ENCODE measurements at regions of chr11 and their contacts with region 1.

Region 1: DNA sequence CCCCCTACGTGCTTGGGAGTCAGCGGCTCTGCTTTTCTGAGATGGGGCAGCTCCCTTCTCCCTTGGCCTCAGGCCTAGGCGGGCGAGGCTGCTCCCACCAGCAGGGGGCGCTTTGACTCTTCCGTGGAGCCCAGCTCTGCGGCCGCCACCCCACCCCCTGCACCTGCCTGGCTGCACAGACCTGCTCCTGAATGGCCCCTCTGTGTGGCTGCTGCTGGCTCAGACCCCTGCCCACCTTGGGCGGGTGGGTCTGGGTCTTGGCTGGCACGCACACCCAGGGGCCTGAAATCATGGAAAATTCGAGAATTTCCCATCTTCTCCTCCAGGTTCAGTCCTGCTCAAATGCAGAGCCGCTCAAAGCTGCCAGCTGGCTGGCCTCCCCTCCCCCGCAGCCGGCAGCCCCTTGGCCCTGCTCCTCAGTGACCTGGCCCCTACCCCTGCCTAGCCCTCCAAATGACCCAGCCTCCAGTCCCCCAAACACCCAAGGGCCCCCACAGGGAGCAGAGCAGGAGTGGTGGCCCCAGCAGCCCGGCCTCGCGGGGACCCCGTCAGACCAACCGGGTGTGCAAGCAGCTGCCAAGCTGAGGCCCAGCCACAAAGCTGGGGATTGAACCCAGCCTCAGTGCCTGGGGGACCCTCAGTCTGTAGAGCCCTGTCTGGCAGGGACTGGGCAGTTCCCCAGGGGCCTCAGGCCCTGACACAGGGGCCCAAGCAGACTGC is 9.0 kb downstream of the PRR33 start:
- DNase-seq: peak; percentile 57 to 91 (median 83)
- ATAC-seq: peak; percentile 91
- H3K4me3 ChIP-seq: no peak overlapping the region
- H3K4me3 Mint-ChIP-seq: no peak overlapping the region
- H3K27ac ChIP-seq: no peak overlapping the region
- H3K27ac Mint-ChIP-seq: no peak overlapping the region
- H3K4me1 ChIP-seq: peaks cover 14% of the 10 kb centered on the region
- H3K4me1 Mint-ChIP-seq: peaks cover 12% of the 10 kb centered on the region
- H3K27me3 ChIP-seq: no peaks in the 10 kb centered on the region
- H3K27me3 Mint-ChIP-seq: no peaks in the 10 kb centered on the region
- CTCF ChIP-seq: peak; percentile 69

Region 2: DNA sequence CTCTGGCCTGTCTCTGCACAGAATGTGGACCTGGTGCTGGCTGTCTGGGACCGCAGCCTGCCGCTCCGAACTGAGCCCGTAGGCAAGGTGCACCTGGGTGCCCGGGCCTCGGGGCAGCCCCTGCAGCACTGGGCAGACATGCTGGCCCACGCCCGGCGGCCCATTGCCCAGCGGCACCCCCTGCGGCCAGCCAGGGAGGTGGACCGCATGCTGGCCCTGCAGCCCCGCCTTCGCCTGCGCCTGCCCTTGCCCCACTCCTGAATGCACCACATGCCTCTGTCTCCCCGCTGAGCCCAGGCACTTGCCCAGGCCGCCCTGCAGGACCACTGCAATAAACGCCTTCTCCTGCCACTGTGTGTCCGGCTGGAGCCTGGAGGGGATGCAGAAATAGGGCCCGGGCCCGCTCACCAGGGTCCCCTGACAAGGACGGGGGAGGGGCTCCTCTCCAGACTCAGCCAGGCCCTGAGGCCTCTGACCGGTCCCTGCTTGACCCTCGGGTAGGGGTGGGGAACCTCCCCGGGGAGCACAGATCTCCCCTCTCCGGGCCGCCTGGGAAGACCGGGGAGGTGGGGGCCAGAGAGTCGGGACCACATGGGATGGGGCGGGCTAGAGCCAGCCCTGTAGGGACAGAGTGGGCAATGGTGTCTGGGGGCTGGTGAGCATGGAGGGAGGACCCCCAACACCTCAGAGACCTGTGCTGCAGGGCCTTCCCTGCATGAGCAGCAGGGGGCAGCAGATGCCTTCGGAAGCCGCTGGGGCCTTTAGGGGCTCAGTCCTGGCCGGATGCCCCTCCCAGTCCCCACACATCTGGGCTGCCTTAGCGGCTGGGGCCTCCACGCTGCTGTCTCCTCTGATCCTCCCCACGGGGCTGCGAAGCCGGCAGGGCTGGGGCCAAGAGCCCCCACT is 45.3 kb before region 1 on chr11:
- CTCF ChIA-PET with region 1: interaction called, 16 read pairs
- POLR2A ChIA-PET with region 1: interaction called, 3 read pairs
- intact Hi-C with region 1: loop called (anchors 1 kb)
- DNase-seq: peak; percentile 73 to 94 (median 88)
- ATAC-seq: peak; percentile 98
- H3K4me3 ChIP-seq: no peak overlapping the region
- H3K4me3 Mint-ChIP-seq: no peak overlapping the region
- H3K27ac ChIP-seq: no peak overlapping the region
- H3K27ac Mint-ChIP-seq: no peak overlapping the region
- H3K4me1 ChIP-seq: peaks cover 25% of the 10 kb centered on the region
- H3K4me1 Mint-ChIP-seq: peaks cover 10% of the 10 kb centered on the region
- H3K27me3 ChIP-seq: peaks cover 0 to 6% of the 10 kb centered on the region in 2 experiments
- H3K27me3 Mint-ChIP-seq: no peaks in the 10 kb centered on the region
- CTCF ChIP-seq: peak; percentile 84

Region 3: DNA sequence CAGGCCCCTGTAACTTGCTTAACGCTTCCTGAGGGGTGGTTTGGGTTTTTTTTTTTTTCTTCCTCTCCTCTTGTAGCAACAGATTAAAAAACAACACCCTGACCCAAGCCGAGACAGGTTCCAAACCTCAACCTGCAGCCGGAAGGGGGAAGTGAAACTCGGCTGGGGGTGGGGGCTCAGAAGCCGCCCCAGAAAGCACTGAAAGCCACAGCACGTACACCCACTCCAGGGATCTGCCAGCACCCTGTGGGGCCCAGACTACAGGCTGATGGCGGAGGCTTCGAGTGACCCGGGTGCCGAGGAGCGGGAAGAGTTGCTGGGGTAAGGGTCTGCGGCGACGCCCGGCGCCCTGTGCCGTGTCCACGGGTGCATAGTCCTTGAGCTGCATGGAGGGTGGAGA is 29.8 kb before region 1 on chr11 and contains the start of gene LSP1:
- CTCF ChIA-PET with region 1: interaction called, 74 read pairs
- POLR2A ChIA-PET with region 1: interaction called, 27 read pairs
- intact Hi-C with region 1: loop called in 1 of 2 experiments (anchors 2 kb)
- DNase-seq: peak; percentile 64 to 96 (median 86)
- ATAC-seq: peak; percentile 65
- H3K4me3 ChIP-seq: peak within 1 kb of the TSS; percentile 81 to 100
- H3K4me3 Mint-ChIP-seq: peak within 1 kb of the TSS; percentile 94
- H3K27ac ChIP-seq: peak within 1 kb of the TSS; percentile 90 to 91
- H3K27ac Mint-ChIP-seq: peak within 1 kb of the TSS; percentile 92
- H3K4me1 ChIP-seq: peaks cover 81% of the 10 kb centered on the region
- H3K4me1 Mint-ChIP-seq: peaks cover 67% of the 10 kb centered on the region
- H3K27me3 ChIP-seq: no peaks in the 10 kb centered on the region
- H3K27me3 Mint-ChIP-seq: no peaks in the 10 kb centered on the region
- CTCF ChIP-seq: no peak
- total RNA-seq, gene LSP1: 190 to 191 TPM

Region 4: GRCh38 chr11:1870721-1871466 is 11.8 kb before region 1 on chr11:
- CTCF ChIA-PET with region 1: interaction called, 24 read pairs
- POLR2A ChIA-PET with region 1: no interaction called
- intact Hi-C with region 1: no loop called
- DNase-seq: peak in 8 of 9 experiments; percentile 31 to 82 (median 62)
- ATAC-seq: peak; percentile 84
- H3K4me3 ChIP-seq: peak overlapping the region; percentile 26 to 33
- H3K4me3 Mint-ChIP-seq: peak overlapping the region; percentile 76
- H3K27ac ChIP-seq: peak overlapping the region; percentile 45 to 46
- H3K27ac Mint-ChIP-seq: peak overlapping the region; percentile 94
- H3K4me1 ChIP-seq: peaks cover 70% of the 10 kb centered on the region
- H3K4me1 Mint-ChIP-seq: peaks cover 59% of the 10 kb centered on the region
- H3K27me3 ChIP-seq: no peaks in the 10 kb centered on the region
- H3K27me3 Mint-ChIP-seq: no peaks in the 10 kb centered on the region
- CTCF ChIP-seq: no peak

Region 5: GRCh38 chr11:1943977-1944376 is 61.3 kb after region 1 on chr11:
- CTCF ChIA-PET with region 1: interaction called, 34 read pairs
- POLR2A ChIA-PET with region 1: interaction called, 3 read pairs
- intact Hi-C with region 1: no loop called
- DNase-seq: peak in 1 of 9 experiments; percentile 40
- ATAC-seq: no peak
- H3K4me3 ChIP-seq: no peak overlapping the region
- H3K4me3 Mint-ChIP-seq: no peak overlapping the region
- H3K27ac ChIP-seq: no peak overlapping the region
- H3K27ac Mint-ChIP-seq: no peak overlapping the region
- H3K4me1 ChIP-seq: peaks cover 3% of the 10 kb centered on the region
- H3K4me1 Mint-ChIP-seq: peaks cover 5% of the 10 kb centered on the region
- H3K27me3 ChIP-seq: no peaks in the 10 kb centered on the region
- H3K27me3 Mint-ChIP-seq: no peaks in the 10 kb centered on the region
- CTCF ChIP-seq: no peak

Region 6: DNA sequence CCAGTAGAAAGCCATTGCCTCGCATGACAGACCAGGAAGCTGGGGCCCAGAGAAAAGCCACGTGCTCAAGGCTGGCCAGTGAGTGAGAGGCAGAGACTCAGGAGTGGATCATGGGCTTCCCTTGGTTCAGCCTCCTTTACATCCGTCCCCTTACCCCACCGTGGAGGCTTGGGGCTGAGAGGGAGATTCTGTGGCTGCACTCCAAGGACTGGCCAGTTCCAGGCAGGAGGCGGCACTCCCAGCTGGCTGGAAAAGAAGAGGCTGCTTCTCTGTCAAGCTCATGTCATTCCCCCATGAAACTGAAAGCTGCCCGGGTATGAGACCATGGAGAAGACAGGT is 394.3 kb after region 1 on chr11:
- CTCF ChIA-PET with region 1: no interaction called
- POLR2A ChIA-PET with region 1: no interaction called
- intact Hi-C with region 1: no loop called
- DNase-seq: no peak
- ATAC-seq: no peak
- H3K4me3 ChIP-seq: no peak overlapping the region
- H3K4me3 Mint-ChIP-seq: no peak overlapping the region
- H3K27ac ChIP-seq: no peak overlapping the region
- H3K27ac Mint-ChIP-seq: no peak overlapping the region
- H3K4me1 ChIP-seq: no peaks in the 10 kb centered on the region
- H3K4me1 Mint-ChIP-seq: no peaks in the 10 kb centered on the region
- H3K27me3 ChIP-seq: peaks cover 0 to 2% of the 10 kb centered on the region in 2 experiments
- H3K27me3 Mint-ChIP-seq: peaks cover 2% of the 10 kb centered on the region
- CTCF ChIP-seq: no peak